ENCODE measurements at regions of chr1 and their contacts with region 1.

Region 1: DNA sequence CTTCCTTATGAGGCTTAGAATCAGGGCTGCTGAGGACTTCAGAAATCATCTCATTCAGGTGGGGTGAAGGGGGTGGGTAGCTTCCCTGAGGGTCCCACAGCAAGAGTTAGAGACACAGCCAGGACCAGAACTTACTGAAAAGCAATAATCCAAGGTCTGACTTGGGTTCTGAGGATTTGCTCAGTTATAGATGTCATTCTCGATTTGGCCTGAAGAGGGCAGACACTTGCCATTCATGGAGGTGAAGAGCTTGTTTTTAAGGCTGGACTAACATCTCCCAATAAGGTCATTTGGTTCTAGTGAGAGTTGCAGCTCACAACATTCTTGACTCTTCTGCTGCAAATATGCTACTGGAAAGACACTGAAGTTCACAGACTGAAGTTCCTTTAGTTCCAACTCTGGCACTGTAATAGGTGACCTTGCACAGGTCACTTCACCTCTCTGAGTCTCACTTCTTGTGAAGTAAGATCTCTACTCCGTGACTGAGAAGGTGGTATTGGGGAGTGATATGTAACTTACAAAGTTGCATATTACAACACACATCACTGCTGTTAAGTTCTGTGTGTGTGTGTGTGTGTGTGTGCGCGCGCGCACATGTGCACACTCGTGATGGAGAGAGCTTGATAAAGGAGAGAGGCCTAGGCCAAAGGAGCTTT is 69.8 kb upstream of the DIRAS3 start:
- DNase-seq: peak; percentile 24
- ATAC-seq: peak; percentile 81
- H3K4me3 ChIP-seq: no peak overlapping the region
- H3K27ac ChIP-seq: no peak overlapping the region
- H3K4me1 ChIP-seq: no peaks in the 10 kb centered on the region
- H3K27me3 ChIP-seq: no peaks in the 10 kb centered on the region
- CTCF ChIP-seq: peak; percentile 69 to 82 (median 75)
- EP300 ChIP-seq: no peak
- POLR2A ChIP-seq: no peak
- RAD21 ChIP-seq: peak; percentile 91

Region 2: DNA sequence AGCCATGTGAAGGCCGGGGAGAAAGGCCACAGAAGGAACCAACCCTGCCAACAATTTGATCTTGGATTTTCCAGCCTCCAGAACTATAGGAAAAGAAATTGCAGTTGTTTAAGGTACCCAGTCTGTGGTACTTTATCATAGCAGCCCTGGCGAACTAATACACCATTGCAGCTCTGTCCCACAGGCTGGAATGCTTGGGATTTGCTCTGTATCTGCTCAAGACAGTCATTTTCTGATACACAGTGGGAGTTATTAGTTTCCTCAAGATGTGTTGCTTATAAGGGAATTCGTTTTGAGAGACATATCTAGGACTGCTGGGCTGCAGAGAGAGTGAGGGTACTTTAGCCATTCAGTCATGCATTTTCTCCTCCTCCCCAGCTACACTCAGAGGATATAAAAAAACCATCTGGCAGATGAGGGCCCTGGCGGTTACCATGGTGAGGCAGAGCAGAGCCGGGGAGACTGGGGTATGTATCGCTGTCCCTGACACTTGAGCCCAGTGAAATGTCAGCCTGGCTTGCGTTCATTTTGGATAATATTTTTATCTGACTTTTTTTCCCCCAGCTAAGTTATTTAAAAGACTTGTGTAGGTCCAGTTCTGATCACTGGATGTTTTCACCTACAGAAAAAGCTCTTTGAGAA is 174.4 kb before region 1 on chr1:
- CTCF ChIA-PET with region 1: no interaction called
- POLR2A ChIA-PET with region 1: no interaction called
- RAD21 ChIA-PET with region 1: no interaction called
- SMC1A ChIA-PET with region 1: no interaction called
- in situ Hi-C with region 1: no loop called
- intact Hi-C with region 1: no loop called
- DNase-seq: no peak
- ATAC-seq: no peak
- H3K4me3 ChIP-seq: no peak overlapping the region
- H3K27ac ChIP-seq: no peak overlapping the region
- H3K4me1 ChIP-seq: no peaks in the 10 kb centered on the region
- H3K27me3 ChIP-seq: no peaks in the 10 kb centered on the region
- CTCF ChIP-seq: no peak
- EP300 ChIP-seq: no peak
- POLR2A ChIP-seq: no peak
- RAD21 ChIP-seq: no peak

Region 3: GRCh38 chr1:68093737-68094136 is 26.5 kb before region 1 on chr1:
- CTCF ChIA-PET with region 1: interaction called, 13 read pairs
- POLR2A ChIA-PET with region 1: no interaction called
- RAD21 ChIA-PET with region 1: no interaction called
- SMC1A ChIA-PET with region 1: interaction called, 4 read pairs
- in situ Hi-C with region 1: no loop called
- intact Hi-C with region 1: no loop called
- DNase-seq: no peak
- ATAC-seq: no peak
- H3K4me3 ChIP-seq: no peak overlapping the region
- H3K27ac ChIP-seq: no peak overlapping the region
- H3K4me1 ChIP-seq: no peaks in the 10 kb centered on the region
- H3K27me3 ChIP-seq: no peaks in the 10 kb centered on the region
- CTCF ChIP-seq: no peak
- EP300 ChIP-seq: no peak
- POLR2A ChIP-seq: no peak
- RAD21 ChIP-seq: no peak

Region 4: GRCh38 chr1:68188060-68188538 is 67.8 kb after region 1 on chr1:
- CTCF ChIA-PET with region 1: interaction called, 9 read pairs
- POLR2A ChIA-PET with region 1: no interaction called
- RAD21 ChIA-PET with region 1: interaction called, 7 read pairs
- SMC1A ChIA-PET with region 1: interaction called, 21 read pairs
- in situ Hi-C with region 1: no loop called
- intact Hi-C with region 1: no loop called
- DNase-seq: no peak
- ATAC-seq: peak; percentile 85
- H3K4me3 ChIP-seq: no peak overlapping the region
- H3K27ac ChIP-seq: no peak overlapping the region
- H3K4me1 ChIP-seq: no peaks in the 10 kb centered on the region
- H3K27me3 ChIP-seq: no peaks in the 10 kb centered on the region; a peak in 1 of 4 replicates
- CTCF ChIP-seq: no peak
- EP300 ChIP-seq: peak in 1 of 2 experiments; percentile 14; a peak in 2 of 4 replicates
- POLR2A ChIP-seq: no peak
- RAD21 ChIP-seq: no peak

Region 5: DNA sequence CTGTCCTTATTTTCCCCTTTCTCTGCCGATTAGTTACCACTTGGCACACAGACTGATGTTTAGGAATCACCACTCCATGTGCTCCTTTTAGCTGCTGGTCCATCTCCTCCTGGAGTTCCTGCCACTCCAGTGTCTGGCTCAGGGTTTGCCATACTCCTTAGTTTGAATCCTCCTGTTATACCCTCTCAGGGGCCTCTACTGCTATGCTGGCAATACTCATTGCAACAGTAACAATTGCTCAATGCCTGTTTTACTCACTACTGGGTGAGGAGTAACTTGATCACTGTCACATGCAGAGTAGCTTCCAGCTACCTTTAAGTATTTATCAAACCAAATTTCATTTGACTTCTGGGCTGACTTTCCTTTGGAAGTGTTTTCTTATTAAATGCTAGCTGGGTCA is 219.2 kb after region 1 on chr1:
- CTCF ChIA-PET with region 1: interaction called, 178 read pairs
- POLR2A ChIA-PET with region 1: no interaction called
- RAD21 ChIA-PET with region 1: interaction called, 125 read pairs
- SMC1A ChIA-PET with region 1: interaction called, 83 read pairs
- in situ Hi-C with region 1: loop called (anchors 5 kb)
- intact Hi-C with region 1: loop called (anchors 1 kb)
- DNase-seq: no peak
- ATAC-seq: no peak
- H3K4me3 ChIP-seq: no peak overlapping the region
- H3K27ac ChIP-seq: no peak overlapping the region
- H3K4me1 ChIP-seq: no peaks in the 10 kb centered on the region
- H3K27me3 ChIP-seq: no peaks in the 10 kb centered on the region
- CTCF ChIP-seq: no peak
- EP300 ChIP-seq: no peak
- POLR2A ChIP-seq: no peak
- RAD21 ChIP-seq: no peak

Region 6: DNA sequence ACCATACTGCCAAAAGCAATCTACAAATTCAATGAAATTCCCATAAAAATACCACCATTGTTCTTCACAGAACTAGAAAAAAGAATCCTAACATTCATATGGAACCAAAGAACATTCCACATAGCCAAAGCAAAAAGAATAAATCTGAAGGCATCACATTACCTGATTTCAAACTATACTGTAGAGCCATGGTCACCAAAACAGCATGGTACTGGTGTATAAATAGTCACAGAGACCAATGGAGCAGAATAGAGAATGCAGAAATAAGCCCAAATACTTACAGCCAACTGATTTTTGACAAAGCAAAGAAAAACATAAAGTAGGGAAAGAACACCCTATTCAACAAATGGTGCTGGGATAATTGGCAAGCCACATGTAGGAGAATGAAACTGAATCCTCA is 382.8 kb after region 1 on chr1:
- CTCF ChIA-PET with region 1: no interaction called
- POLR2A ChIA-PET with region 1: no interaction called
- RAD21 ChIA-PET with region 1: no interaction called
- SMC1A ChIA-PET with region 1: no interaction called
- in situ Hi-C with region 1: no loop called
- intact Hi-C with region 1: no loop called
- DNase-seq: no peak
- ATAC-seq: no peak
- H3K4me3 ChIP-seq: no peak overlapping the region
- H3K27ac ChIP-seq: no peak overlapping the region
- H3K4me1 ChIP-seq: no peaks in the 10 kb centered on the region
- H3K27me3 ChIP-seq: no peaks in the 10 kb centered on the region
- CTCF ChIP-seq: no peak
- EP300 ChIP-seq: no peak
- POLR2A ChIP-seq: no peak
- RAD21 ChIP-seq: no peak

Region 7: GRCh38 chr1:68590473-68590872 is 470.2 kb after region 1 on chr1:
- CTCF ChIA-PET with region 1: interaction called, 3 read pairs
- POLR2A ChIA-PET with region 1: no interaction called
- RAD21 ChIA-PET with region 1: no interaction called
- SMC1A ChIA-PET with region 1: no interaction called
- in situ Hi-C with region 1: no loop called
- intact Hi-C with region 1: loop called (anchors 10 kb)
- DNase-seq: no peak
- ATAC-seq: no peak
- H3K4me3 ChIP-seq: no peak overlapping the region
- H3K27ac ChIP-seq: no peak overlapping the region
- H3K4me1 ChIP-seq: no peaks in the 10 kb centered on the region
- H3K27me3 ChIP-seq: no peaks in the 10 kb centered on the region
- CTCF ChIP-seq: 0 out of 6 replicates have a peak, but pooled peaks of 1 of the 3 experiments have one; percentile 1
- EP300 ChIP-seq: no peak
- POLR2A ChIP-seq: no peak
- RAD21 ChIP-seq: no peak

Region 8: GRCh38 chr1:68745011-68745410 is 624.7 kb after region 1 on chr1:
- CTCF ChIA-PET with region 1: no interaction called
- POLR2A ChIA-PET with region 1: no interaction called
- RAD21 ChIA-PET with region 1: no interaction called
- SMC1A ChIA-PET with region 1: no interaction called
- in situ Hi-C with region 1: no loop called
- intact Hi-C with region 1: no loop called
- DNase-seq: no peak
- ATAC-seq: no peak
- H3K4me3 ChIP-seq: no peak overlapping the region
- H3K27ac ChIP-seq: no peak overlapping the region
- H3K4me1 ChIP-seq: no peaks in the 10 kb centered on the region
- H3K27me3 ChIP-seq: no peaks in the 10 kb centered on the region
- CTCF ChIP-seq: no peak
- EP300 ChIP-seq: no peak
- POLR2A ChIP-seq: no peak
- RAD21 ChIP-seq: no peak